Activated CD8-positive, alpha-beta T cell treated with anti-CD3 and anti-CD28 coated beads, Interleukin-2, amount 10 ng/mL, durations not matched to agents 7 days and 5 days (primary cell): ENCODE measurements at regions of chr4 and their contacts with region 1.

Region 1: DNA sequence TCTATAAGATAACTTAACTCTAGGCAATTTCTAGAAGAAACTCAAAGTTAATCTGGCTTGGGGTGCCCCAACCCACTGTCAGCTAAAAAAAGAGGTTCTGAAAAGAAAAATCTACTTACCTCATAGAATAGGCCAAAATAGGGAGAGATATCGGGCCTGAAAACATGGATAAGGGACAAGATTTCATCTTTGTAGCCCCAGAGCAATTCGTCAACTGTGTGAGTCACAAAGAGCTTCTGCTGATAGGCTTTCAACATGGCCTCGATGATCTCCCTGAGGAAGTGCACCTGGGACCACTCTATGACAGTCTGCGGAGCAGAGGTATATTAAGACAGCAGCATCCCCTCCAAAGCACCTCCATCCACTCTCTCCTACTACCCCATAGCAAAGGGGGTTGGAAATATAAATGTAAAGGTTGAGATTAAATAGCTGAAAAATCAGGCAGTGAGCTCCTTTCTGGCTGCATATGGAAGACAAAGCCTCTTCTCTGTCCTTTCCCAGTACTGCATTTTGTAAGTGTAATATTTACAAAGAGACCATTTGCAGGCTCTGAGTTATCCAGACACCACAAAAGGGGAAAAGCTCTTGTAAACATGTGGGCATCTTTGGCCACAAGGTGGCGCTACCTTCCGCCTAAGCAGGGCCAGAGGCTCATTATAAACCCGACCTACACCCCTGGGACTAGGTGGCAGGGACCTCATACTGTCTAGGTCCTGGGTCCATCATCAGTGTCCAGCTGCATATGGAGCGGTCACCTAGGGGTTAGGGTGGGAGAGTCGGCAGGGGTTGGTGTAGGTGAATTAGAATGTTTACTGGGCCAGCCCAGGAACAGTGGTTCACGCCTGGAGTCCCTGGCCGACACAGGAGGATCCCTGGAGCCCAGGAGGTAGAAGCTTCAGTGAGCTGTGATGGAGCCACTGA is 31.5 kb upstream of the NUP54 start:
- DNase-seq: peak; percentile 85
- ATAC-seq: peak; percentile 95
- H3K4me3 Mint-ChIP-seq: no peak overlapping the region
- H3K27ac Mint-ChIP-seq: no peak overlapping the region
- H3K4me1 Mint-ChIP-seq: no peaks in the 10 kb centered on the region
- H3K27me3 Mint-ChIP-seq: no peaks in the 10 kb centered on the region

Region 2: GRCh38 chr4:76156635-76157034 is 23.0 kb before region 1 on chr4:
- CTCF ChIA-PET with region 1: interaction called, 10 read pairs
- POLR2A ChIA-PET with region 1: no interaction called
- DNase-seq: no peak
- ATAC-seq: no peak
- H3K4me3 Mint-ChIP-seq: no peak overlapping the region
- H3K27ac Mint-ChIP-seq: no peak overlapping the region
- H3K4me1 Mint-ChIP-seq: no peaks in the 10 kb centered on the region
- H3K27me3 Mint-ChIP-seq: no peaks in the 10 kb centered on the region

Region 3: GRCh38 chr4:76198411-76199237 is 19.0 kb after region 1 on chr4:
- CTCF ChIA-PET with region 1: interaction called, 20 read pairs
- POLR2A ChIA-PET with region 1: no interaction called
- DNase-seq: no peak
- ATAC-seq: peak; percentile 51
- H3K4me3 Mint-ChIP-seq: no peak overlapping the region
- H3K27ac Mint-ChIP-seq: no peak overlapping the region
- H3K4me1 Mint-ChIP-seq: peaks cover 40% of the 10 kb centered on the region
- H3K27me3 Mint-ChIP-seq: no peaks in the 10 kb centered on the region

Region 4: GRCh38 chr4:76279472-76279871 is 99.8 kb after region 1 on chr4:
- CTCF ChIA-PET with region 1: interaction called, 21 read pairs
- POLR2A ChIA-PET with region 1: no interaction called
- DNase-seq: peak; percentile 47
- ATAC-seq: no peak
- H3K4me3 Mint-ChIP-seq: no peak overlapping the region
- H3K27ac Mint-ChIP-seq: no peak overlapping the region
- H3K4me1 Mint-ChIP-seq: peaks cover 8% of the 10 kb centered on the region
- H3K27me3 Mint-ChIP-seq: peaks cover 24% of the 10 kb centered on the region

Region 5: DNA sequence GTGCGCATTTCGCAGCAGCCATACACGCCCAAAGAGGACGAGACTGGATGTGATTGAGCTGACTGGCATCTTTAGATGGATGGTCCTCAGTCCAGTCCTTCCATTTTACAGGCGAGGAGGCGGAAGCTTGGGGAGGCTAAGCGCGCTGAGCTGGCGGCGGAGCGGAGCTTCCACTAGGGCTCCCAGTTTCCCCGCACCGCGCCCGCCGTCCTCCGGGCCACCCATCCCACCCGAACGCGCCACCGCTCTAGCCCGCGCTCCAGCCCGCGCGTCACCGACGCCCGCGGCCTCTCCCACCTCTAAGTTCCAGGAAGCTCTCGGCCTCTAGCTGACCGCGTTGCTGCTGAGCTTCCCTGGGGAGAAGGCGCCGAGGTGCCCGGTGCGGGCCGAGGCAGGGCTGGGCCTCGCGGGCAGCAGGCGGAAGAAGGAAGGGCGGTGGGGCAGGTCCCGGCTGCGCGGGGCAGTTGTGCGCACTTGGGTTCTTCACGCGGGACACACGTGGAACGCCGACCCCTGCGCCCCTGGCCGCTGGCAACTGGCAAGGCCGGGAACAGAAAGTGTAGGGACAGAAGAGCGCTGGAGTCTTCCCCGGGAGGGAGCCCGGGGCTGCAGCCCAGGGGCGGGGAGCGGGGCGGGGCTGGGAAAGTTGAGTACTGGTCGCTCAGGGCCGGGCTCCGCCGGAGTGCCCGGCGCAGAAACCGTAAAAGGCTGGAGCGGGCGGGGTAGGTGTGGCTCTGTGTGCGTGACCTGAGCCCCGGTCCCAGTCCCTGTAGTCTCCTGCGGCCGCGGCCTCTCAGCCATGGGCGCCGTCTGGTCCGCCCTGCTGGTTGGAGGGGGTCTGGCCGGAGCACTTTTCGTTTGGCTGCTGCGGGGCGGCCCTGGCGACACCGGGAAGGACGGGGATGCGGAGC is 126.6 kb after region 1 on chr4 and contains the start of gene STBD1:
- CTCF ChIA-PET with region 1: interaction called, 10 read pairs
- POLR2A ChIA-PET with region 1: no interaction called
- DNase-seq: peak; percentile 46
- ATAC-seq: peak; percentile 66
- H3K4me3 Mint-ChIP-seq: peak within 1 kb of the TSS; percentile 64
- H3K27ac Mint-ChIP-seq: peak within 1 kb of the TSS; percentile 79
- H3K4me1 Mint-ChIP-seq: peaks cover 43% of the 10 kb centered on the region
- H3K27me3 Mint-ChIP-seq: peaks cover 26% of the 10 kb centered on the region
- total RNA-seq, gene STBD1: 1.5 to 1.6 TPM

Region 6: GRCh38 chr4:76377911-76378310 is 198.3 kb after region 1 on chr4:
- CTCF ChIA-PET with region 1: interaction called, 130 read pairs
- POLR2A ChIA-PET with region 1: interaction called, 4 read pairs
- DNase-seq: peak; percentile 64
- ATAC-seq: no peak
- H3K4me3 Mint-ChIP-seq: no peak overlapping the region
- H3K27ac Mint-ChIP-seq: no peak overlapping the region
- H3K4me1 Mint-ChIP-seq: no peaks in the 10 kb centered on the region
- H3K27me3 Mint-ChIP-seq: peaks cover 10% of the 10 kb centered on the region

Region 7: GRCh38 chr4:76504613-76505465 is 325.2 kb after region 1 on chr4:
- CTCF ChIA-PET with region 1: interaction called, 19 read pairs
- POLR2A ChIA-PET with region 1: interaction called, 3 read pairs
- DNase-seq: no peak
- ATAC-seq: no peak
- H3K4me3 Mint-ChIP-seq: no peak overlapping the region
- H3K27ac Mint-ChIP-seq: no peak overlapping the region
- H3K4me1 Mint-ChIP-seq: no peaks in the 10 kb centered on the region
- H3K27me3 Mint-ChIP-seq: peaks cover 15% of the 10 kb centered on the region

Region 8: DNA sequence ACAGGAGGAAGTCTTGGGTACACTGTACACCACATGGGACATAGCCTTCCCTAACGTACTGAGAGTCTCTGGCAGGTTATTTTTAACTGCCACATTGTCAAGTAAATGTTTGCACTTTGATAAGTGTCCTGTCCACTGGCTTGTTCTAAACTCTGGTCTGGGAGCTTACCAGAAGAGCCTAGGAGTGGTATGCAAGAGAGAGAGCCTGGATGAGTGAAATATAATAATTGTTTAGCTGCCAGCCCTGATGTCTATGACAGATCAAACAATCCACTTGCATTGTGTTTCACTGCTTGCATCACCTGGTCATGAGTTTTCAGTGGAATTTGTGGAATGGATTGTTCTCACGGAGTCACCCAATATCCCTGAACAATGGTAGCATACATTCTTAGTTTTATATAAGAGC is 346.9 kb after region 1 on chr4:
- CTCF ChIA-PET with region 1: no interaction called
- POLR2A ChIA-PET with region 1: no interaction called
- DNase-seq: no peak
- ATAC-seq: no peak
- H3K4me3 Mint-ChIP-seq: no peak overlapping the region
- H3K27ac Mint-ChIP-seq: no peak overlapping the region
- H3K4me1 Mint-ChIP-seq: no peaks in the 10 kb centered on the region
- H3K27me3 Mint-ChIP-seq: peaks cover 2% of the 10 kb centered on the region